ENCODE measurements at regions of chr6 and their contacts with region 1.

Region 1: DNA sequence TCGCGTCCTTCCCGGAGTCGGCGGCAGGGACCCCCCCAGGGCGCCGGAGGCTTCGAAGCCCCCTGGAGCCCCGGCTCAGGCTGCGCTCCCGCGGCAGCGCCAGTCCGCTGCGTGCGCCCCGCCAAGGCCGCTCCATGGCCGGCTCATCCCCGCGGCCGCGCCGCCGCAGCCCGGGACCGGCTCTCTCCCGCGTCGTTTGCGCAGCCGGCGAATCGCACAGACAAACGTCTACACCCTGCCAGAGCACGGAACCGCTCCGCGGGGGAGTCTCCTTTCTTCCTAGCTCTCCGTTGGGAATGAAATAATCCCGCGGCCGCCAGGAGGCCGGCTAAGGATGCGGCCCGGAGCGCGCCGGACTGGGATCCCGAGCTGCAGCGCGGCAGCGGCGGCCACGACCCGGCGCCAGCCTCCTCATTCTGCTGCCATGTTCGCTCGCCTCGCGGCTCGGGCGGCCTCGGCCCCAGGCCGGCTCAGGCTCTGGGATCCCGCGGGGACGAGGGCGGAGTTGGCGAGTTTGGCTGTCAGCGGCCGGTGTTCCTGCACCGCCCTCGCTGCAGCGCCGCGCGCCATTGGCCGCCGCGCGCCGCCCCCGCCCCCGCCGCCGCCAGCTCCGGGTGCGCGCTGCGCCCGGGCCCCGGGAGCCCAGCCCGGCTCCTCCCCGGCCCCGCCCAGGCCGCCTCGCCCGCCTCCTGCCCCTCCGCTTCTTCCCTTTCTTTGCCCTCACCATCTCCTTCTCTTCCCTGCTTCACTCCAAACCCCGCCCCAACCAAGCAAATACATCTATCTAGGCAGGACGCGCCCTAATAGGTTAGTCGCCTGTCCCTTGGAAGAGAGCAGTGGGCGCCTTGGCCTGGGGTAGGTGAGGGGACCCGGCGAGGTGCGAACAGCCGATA is at the start of gene GFOD1:
- DNase-seq: peak; percentile 91 to 94
- ATAC-seq: peak; percentile 83 to 90 (median 87)
- H3K4me3 ChIP-seq: peak within 1 kb of the TSS; percentile 89
- H3K27ac ChIP-seq: peak within 1 kb of the TSS; percentile 97
- H3K4me1 ChIP-seq: peaks cover 33% of the 10 kb centered on the region
- H3K27me3 ChIP-seq: no peaks in the 10 kb centered on the region
- CTCF ChIP-seq: no peak
- total RNA-seq, gene GFOD1: 16.7 to 34.2 (median 23.9) TPM

Region 2: DNA sequence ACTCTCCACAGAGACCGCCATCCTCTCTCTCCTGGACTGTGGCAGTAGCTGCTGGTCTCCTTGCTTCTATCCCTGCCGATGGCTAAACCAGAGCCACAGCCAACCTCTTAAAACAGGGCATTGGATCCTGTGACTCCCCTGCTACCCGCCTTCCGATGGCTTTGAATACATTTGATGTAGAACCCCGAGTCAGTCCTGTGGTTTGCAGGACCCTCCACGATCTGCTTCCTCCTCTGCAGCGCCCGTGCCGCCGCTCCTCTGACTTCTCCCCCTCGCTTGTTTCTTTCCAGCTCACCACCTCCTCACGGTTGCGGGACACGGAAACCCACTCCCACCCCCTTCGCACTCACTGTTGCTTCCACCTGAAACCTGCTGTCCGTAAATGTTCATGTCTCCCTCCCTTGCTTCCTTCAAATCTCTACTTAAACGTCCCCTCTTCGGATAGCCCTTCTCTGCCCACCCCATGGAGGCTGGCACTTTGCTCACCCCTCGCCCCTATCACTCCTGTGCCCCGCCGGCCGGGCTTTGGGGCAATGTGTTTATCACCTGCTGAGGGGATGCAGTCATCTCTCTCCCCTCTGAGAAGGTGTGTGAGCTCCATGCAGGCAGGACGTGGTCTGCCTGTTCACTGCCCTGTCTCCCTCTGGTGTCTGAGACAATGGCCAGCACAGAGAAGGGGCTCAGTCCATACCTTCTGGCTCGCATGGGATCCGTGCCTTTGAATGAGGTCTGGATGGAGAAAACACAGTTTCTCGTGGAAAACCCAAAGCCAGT is 67.8 kb before region 1 on chr6:
- intact Hi-C with region 1: loop called in 1 of 2 experiments (anchors 5 kb)
- DNase-seq: no peak
- ATAC-seq: no peak
- H3K4me3 ChIP-seq: no peak overlapping the region
- H3K27ac ChIP-seq: peak overlapping the region; percentile 31
- H3K4me1 ChIP-seq: peaks cover 84% of the 10 kb centered on the region
- H3K27me3 ChIP-seq: no peaks in the 10 kb centered on the region
- CTCF ChIP-seq: no peak

Region 3: GRCh38 chr6:13526727-13527670 is 39.6 kb after region 1 on chr6:
- intact Hi-C with region 1: loop called (anchors 2 to 5 kb)
- DNase-seq: peak; percentile 44 to 78
- ATAC-seq: peak; percentile 79 to 82 (median 82)
- H3K4me3 ChIP-seq: peak overlapping the region; percentile 23
- H3K27ac ChIP-seq: peak overlapping the region; percentile 93
- H3K4me1 ChIP-seq: peaks cover 45% of the 10 kb centered on the region
- H3K27me3 ChIP-seq: no peaks in the 10 kb centered on the region
- CTCF ChIP-seq: no peak

Region 4: DNA sequence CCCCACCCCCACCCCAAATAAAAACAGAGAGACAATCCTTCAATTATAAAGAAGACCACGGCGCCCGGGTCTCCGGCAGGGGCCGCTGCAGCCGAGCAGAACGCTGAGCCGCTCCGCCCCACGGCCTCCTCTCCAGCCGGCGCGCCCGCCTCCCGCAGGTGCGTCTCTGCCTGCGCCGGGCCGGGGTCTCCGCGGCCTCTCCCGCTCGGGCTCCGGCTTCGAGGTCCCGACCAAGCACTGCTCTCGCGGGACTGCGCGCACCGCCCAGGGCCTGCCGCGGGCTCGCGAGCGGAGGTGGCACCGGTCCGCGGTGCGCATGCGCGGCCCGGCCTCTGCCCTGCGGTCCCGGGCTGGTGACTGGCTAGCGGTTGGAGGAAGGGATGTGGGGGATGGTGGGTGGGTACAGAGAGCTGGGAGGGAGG is 86.8 kb after region 1 on chr6:
- intact Hi-C with region 1: loop called in 1 of 2 experiments (anchors 2 kb)
- DNase-seq: peak; percentile 90 to 95
- ATAC-seq: peak; percentile 94
- H3K4me3 ChIP-seq: peak overlapping the region; percentile 97
- H3K27ac ChIP-seq: peak overlapping the region; percentile 99
- H3K4me1 ChIP-seq: peaks cover 19% of the 10 kb centered on the region
- H3K27me3 ChIP-seq: no peaks in the 10 kb centered on the region
- CTCF ChIP-seq: peak; percentile 46

Region 5: DNA sequence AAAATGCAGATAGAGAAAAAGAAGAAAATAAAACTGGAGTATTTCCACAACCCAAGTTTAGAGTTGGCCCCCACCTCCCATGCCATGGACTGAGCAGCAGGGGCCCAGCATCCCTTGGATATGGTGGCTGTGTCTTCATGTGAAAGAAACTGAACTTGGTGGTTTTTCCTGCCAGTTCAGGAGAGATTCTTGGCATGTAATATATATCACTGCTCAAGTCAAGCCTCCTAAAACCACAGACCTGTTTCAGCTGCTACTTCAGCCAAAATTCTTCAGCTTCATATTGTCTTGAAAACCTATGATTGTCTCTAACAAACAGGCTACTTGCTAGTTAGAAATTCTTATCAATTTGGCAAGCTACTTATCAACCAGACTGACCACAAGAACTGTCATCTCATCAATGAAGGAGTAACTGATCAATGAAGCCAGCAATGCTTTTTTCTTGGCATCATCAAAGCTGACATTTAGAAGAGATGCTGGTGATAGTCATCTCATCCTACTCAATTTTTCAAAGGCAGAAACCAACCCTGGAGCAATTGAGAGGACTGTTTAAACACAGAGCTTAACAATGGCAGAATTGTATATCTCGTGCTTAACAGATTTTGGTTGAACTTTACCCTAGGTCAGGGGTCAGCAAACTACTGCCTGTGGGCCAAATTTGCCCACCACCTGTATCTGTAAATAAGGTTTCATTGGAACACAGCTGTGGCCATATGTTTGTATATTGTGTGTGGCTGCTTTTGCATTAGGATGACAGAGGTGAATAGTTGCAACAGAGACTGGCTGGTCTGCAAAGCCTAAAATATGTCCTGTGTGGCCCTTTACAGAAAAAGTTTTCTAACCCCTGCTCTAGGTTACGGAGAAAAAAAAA is 117.4 kb after region 1 on chr6:
- intact Hi-C with region 1: no loop called
- DNase-seq: no peak
- ATAC-seq: no peak
- H3K4me3 ChIP-seq: no peak overlapping the region
- H3K27ac ChIP-seq: no peak overlapping the region
- H3K4me1 ChIP-seq: no peaks in the 10 kb centered on the region
- H3K27me3 ChIP-seq: no peaks in the 10 kb centered on the region
- CTCF ChIP-seq: no peak

Region 6: GRCh38 chr6:13742961-13743735 is 255.8 kb after region 1 on chr6:
- intact Hi-C with region 1: no loop called
- DNase-seq: no peak
- ATAC-seq: no peak
- H3K4me3 ChIP-seq: peak overlapping the region; percentile 15
- H3K27ac ChIP-seq: no peak overlapping the region
- H3K4me1 ChIP-seq: no peaks in the 10 kb centered on the region
- H3K27me3 ChIP-seq: no peaks in the 10 kb centered on the region
- CTCF ChIP-seq: no peak

Region 7: GRCh38 chr6:15036690-15037245 is 1549.4 kb after region 1 on chr6:
- intact Hi-C with region 1: no loop called
- DNase-seq: peak; percentile 79 to 95
- ATAC-seq: peak; percentile 97 to 99 (median 98)
- H3K4me3 ChIP-seq: peak overlapping the region; percentile 48
- H3K27ac ChIP-seq: peak overlapping the region; percentile 74
- H3K4me1 ChIP-seq: peaks cover 11% of the 10 kb centered on the region
- H3K27me3 ChIP-seq: no peaks in the 10 kb centered on the region
- CTCF ChIP-seq: no peak